Gastrocnemius medialis (tissue), 4 donors: ENCODE measurements at regions of chr20 and their contacts with region 1.

Region 1: GRCh38 chr20:39986173-39986904 is 702.7 kb downstream of the MAFB start:
- DNase-seq: peak; percentile 94 to 96
- ATAC-seq: peak; percentile 98
- H3K4me3 ChIP-seq: peak overlapping the region in 3 of 4 donors; percentile 14 to 33 (median 32)
- H3K27ac ChIP-seq: peak overlapping the region; percentile 94 to 99 (median 96)
- H3K4me1 ChIP-seq: peaks cover 35 to 43% of the 10 kb centered on the region in 2 donors
- H3K27me3 ChIP-seq: no peaks in the 10 kb centered on the region
- CTCF ChIP-seq: no peak
- POLR2A ChIP-seq: peak; percentile 47 to 55

Region 2: GRCh38 chr20:39941245-39941644 is 45.1 kb before region 1 on chr20:
- in situ Hi-C with region 1: no loop called
- intact Hi-C with region 1: loop called (anchors 5 kb)
- DNase-seq: peak in 1 of 2 donors; percentile 21
- ATAC-seq: peak in 1 of 2 donors; percentile 51
- H3K4me3 ChIP-seq: no peak overlapping the region
- H3K27ac ChIP-seq: no peak overlapping the region
- H3K4me1 ChIP-seq: peaks cover 9 to 13% of the 10 kb centered on the region in 2 donors
- H3K27me3 ChIP-seq: no peaks in the 10 kb centered on the region
- CTCF ChIP-seq: no peak
- POLR2A ChIP-seq: no peak

Region 3: GRCh38 chr20:39960522-39961428 is 25.6 kb before region 1 on chr20:
- in situ Hi-C with region 1: no loop called
- intact Hi-C with region 1: loop called (anchors 2 kb)
- DNase-seq: peak; percentile 26 to 80
- ATAC-seq: peak; percentile 89 to 95
- H3K4me3 ChIP-seq: no peak overlapping the region
- H3K27ac ChIP-seq: peak overlapping the region; percentile 75 to 87 (median 78)
- H3K4me1 ChIP-seq: peaks cover 33 to 45% of the 10 kb centered on the region in 2 donors
- H3K27me3 ChIP-seq: no peaks in the 10 kb centered on the region
- CTCF ChIP-seq: peak in 4 of 5 experiments; percentile 33 to 43 (median 40)
- POLR2A ChIP-seq: no peak